ENCODE measurements at regions of chr16 and their contacts with region 1.

Region 1: DNA sequence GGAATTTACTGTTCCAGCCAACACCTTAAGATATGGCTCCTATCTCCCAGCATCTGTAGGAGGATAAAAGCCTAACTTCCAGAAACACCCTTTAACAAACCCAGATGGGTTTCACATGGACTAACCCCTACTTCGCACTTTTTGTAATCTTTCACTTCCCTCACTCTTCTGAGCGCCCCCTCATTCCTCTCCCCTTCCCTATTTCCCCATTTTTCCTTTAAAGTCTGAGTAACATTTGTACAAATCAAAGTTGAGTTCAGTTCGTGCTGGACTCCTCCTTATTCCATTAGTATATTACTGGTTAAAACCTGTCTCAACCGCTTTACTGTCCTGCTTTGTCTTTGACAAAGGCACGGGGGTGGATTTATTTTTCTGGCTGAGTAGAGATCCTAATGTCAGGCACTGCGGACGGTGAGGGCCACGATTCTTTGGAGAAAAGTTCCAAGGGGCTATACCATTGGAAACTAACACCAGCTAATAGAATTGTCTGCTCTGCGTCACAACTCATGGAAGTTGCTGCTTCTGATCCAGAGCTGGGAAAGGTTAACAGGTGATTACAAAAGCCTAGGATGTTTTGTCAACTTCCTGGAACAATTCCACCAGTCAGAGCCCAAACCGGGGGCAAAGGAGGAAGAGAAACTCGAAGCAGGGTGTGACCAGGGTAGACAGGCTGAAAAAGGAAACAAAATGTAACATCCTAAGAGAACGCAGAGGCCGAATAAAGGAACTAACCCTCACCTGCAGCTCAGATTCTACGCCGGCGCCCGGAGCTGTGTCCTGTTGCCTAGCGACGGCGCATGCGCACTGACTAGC is 12.5 kb downstream of the TAT start:
- DNase-seq: peak in 1 of 9 experiments; percentile 8
- ATAC-seq: no peak
- H3K4me3 ChIP-seq: peak overlapping the region; percentile 64 to 66
- H3K4me3 Mint-ChIP-seq: peak overlapping the region; percentile 91
- H3K27ac ChIP-seq: peak overlapping the region; percentile 72 to 73
- H3K27ac Mint-ChIP-seq: peak overlapping the region; percentile 94
- H3K4me1 ChIP-seq: peaks cover 11% of the 10 kb centered on the region
- H3K4me1 Mint-ChIP-seq: peaks cover 15% of the 10 kb centered on the region
- H3K27me3 ChIP-seq: no peaks in the 10 kb centered on the region
- H3K27me3 Mint-ChIP-seq: no peaks in the 10 kb centered on the region
- CTCF ChIP-seq: no peak

Region 2: DNA sequence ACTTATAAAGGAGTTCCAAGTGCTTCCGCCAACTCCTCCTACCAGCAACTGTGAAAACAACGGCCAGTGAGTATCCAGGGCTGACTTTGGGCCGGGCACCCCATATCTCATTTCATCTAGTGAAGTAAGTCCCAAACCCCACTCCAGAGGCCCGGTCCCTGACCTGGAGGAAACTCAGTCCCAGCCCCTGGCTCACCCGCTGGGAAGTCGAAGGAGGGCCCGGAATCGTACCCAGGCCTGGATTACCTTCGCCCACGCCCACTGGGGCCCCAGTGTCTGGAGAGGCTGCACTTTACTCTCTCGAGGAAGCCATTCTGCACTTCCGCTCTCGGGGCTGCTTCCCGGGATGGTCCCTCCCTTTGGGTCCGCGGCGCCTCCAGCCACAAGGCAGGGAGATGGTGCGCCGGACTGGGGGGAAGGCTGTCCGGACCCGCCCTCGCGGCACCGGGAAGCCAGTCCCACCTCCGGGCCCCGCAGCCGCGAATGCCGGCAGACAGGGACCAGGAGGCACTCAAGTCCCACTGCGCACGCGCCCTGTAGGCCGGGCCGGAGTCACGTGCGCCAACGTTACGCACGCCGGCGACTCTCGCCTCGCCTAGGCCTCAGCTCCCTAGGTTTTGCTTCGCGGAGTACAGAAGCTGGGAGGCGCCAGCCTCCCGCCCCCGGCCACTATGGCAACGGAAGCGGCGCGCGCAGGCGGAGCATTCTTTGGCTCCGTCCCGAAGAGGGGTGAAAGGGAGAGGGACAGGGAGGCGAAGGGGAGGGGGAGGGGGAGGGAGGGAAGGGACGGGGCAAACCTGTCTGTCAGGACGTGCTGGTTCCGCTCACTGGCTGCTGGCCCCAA is 275.2 kb before region 1 on chr16 and contains the start of gene CMTR2:
- CTCF ChIA-PET with region 1: interaction called, 3 read pairs
- POLR2A ChIA-PET with region 1: no interaction called
- intact Hi-C with region 1: loop called (anchors 10 kb)
- DNase-seq: peak; percentile 71 to 95 (median 87)
- ATAC-seq: peak; percentile 91
- H3K4me3 ChIP-seq: peak within 1 kb of the TSS; percentile 72 to 91
- H3K4me3 Mint-ChIP-seq: peak within 1 kb of the TSS; percentile 87
- H3K27ac ChIP-seq: peak within 1 kb of the TSS; percentile 75 to 85
- H3K27ac Mint-ChIP-seq: peak within 1 kb of the TSS; percentile 80
- H3K4me1 ChIP-seq: peaks cover 11% of the 10 kb centered on the region
- H3K4me1 Mint-ChIP-seq: peaks cover 26% of the 10 kb centered on the region
- H3K27me3 ChIP-seq: no peaks in the 10 kb centered on the region
- H3K27me3 Mint-ChIP-seq: peaks cover 14% of the 10 kb centered on the region
- CTCF ChIP-seq: no peak
- total RNA-seq, gene CMTR2: 7.7 to 9.2 TPM

Region 3: GRCh38 chr16:71610936-71611871 is 46.8 kb after region 1 on chr16:
- CTCF ChIA-PET with region 1: interaction called, 48 read pairs
- POLR2A ChIA-PET with region 1: interaction called, 6 read pairs
- intact Hi-C with region 1: loop called (anchors 1 kb)
- DNase-seq: peak; percentile 56 to 86 (median 79)
- ATAC-seq: peak; percentile 97
- H3K4me3 ChIP-seq: no peak overlapping the region
- H3K4me3 Mint-ChIP-seq: peak overlapping the region; percentile 22
- H3K27ac ChIP-seq: no peak overlapping the region
- H3K27ac Mint-ChIP-seq: no peak overlapping the region
- H3K4me1 ChIP-seq: no peaks in the 10 kb centered on the region
- H3K4me1 Mint-ChIP-seq: peaks cover 2% of the 10 kb centered on the region
- H3K27me3 ChIP-seq: no peaks in the 10 kb centered on the region
- H3K27me3 Mint-ChIP-seq: peaks cover 38% of the 10 kb centered on the region
- CTCF ChIP-seq: peak; percentile 88

Region 4: DNA sequence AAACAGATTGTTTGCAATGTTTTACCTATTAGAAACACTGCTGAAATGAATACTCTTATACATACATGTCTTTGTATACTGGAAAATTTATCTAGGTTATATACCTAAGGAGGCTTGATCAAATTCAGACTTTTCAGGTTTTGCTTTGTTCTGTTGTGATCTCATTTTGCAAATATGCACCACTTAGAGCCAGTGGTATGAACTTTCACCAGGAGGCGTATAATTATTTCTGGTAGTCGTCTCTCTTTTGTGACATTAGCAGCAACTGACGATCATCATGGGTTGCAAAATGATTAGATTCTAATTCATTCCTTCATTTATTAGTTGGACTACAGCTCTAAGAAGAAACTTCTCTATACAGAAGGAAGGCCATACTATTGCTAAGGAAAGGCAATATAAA is 217.4 kb after region 1 on chr16:
- CTCF ChIA-PET with region 1: no interaction called
- POLR2A ChIA-PET with region 1: no interaction called
- intact Hi-C with region 1: no loop called
- DNase-seq: no peak
- ATAC-seq: no peak
- H3K4me3 ChIP-seq: no peak overlapping the region
- H3K4me3 Mint-ChIP-seq: no peak overlapping the region
- H3K27ac ChIP-seq: no peak overlapping the region
- H3K27ac Mint-ChIP-seq: no peak overlapping the region
- H3K4me1 ChIP-seq: peaks cover 5% of the 10 kb centered on the region
- H3K4me1 Mint-ChIP-seq: peaks cover 43% of the 10 kb centered on the region
- H3K27me3 ChIP-seq: no peaks in the 10 kb centered on the region
- H3K27me3 Mint-ChIP-seq: no peaks in the 10 kb centered on the region
- CTCF ChIP-seq: no peak

Region 5: DNA sequence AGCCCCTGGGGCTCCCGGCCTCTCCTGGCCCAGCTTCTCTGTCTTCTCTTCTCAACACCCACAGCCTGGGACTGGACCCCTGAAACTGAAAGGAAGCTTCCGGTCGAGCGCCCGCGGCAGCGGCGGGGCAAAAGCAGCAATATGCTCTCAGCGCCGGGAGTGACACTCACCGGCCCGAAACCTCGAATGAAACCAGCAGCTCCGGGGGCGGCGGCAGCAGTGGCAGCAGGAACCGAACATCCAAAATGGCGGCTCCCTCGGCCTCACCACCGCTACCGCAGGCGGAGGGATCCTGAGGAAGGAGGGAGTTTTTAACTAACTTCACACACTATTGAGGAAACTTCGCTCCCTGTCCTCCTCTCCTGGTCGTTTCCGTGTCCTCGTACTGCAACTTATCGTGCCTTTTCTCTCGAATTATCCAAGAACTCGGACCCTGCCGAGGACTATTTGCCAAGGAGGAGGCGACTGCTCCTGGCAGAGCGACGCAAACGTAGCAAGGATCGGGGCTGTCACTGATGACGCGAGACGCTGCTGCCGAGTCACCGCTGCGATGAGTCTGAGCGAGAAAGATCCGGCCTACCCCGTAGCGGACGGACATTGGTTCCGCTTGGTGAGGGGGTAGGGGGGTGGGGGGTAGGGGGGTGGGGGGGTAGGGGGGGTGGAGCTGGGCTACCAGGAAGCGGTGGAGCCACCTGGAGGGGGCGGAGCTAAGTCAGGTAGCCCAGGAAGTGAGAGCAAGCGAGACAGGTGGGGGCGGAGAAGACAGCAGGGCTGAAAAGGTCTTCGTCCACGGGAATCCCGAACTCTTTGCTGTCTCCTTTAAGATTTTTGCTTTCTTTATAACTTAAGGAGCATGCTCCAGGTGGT is 244.5 kb after region 1 on chr16 and contains the start of gene AP1G1:
- CTCF ChIA-PET with region 1: no interaction called
- POLR2A ChIA-PET with region 1: interaction called, 5 read pairs
- intact Hi-C with region 1: loop called in 1 of 2 experiments (anchors 2 kb)
- DNase-seq: peak; percentile 87 to 99 (median 93)
- ATAC-seq: peak; percentile 89
- H3K4me3 ChIP-seq: peak within 1 kb of the TSS; percentile 95
- H3K4me3 Mint-ChIP-seq: peak within 1 kb of the TSS; percentile 95
- H3K27ac ChIP-seq: peak within 1 kb of the TSS; percentile 98
- H3K27ac Mint-ChIP-seq: peak within 1 kb of the TSS; percentile 99
- H3K4me1 ChIP-seq: peaks cover 26% of the 10 kb centered on the region
- H3K4me1 Mint-ChIP-seq: peaks cover 40% of the 10 kb centered on the region
- H3K27me3 ChIP-seq: no peaks in the 10 kb centered on the region
- H3K27me3 Mint-ChIP-seq: no peaks in the 10 kb centered on the region
- CTCF ChIP-seq: no peak
- total RNA-seq, gene AP1G1: 179 to 202 TPM

Region 6: DNA sequence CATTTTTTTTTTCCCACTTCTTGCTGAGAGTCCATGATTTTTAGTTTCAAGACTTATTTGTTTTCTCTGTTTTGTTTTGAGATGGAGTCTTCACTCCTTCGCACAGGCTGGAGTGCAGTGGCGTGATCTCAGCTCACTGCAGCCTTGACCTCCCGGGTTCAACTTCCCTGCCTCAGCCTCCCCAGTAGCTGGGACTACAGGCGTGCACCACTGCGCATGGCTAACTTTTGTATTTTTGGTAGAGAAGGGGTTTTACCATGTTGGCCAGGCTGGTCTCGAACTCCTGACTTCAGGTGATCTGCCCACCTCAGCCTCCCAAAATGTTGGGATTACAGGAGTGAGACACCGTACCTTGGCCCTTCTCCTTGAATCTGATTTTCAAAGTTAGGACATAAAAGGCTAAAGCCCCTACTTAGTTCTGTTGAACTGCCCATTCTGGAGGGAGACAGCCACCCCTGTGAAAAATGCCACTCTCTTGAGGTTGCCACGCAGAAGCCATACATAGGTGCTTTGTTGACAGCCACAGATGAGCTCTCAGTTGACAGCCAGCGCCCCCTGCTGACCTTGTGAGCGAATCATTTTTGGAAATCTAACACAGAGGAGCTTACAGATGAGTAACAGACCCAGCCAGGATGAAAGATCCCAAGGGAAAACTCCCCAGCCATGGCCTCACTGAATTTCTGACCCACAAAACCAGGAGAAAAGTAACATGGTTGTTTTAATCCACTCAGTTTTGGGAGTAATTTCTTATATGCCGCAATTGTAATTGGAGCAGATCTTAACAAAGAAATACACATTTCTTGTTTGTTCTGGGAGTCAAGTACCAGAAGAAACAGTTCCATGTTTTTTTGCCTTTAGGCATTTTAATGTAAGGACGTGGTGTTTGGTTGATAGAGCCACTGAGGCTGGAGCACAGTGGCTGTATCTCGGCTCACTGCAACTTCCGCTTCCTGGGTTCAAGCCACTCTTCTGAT is 397.0 kb after region 1 on chr16:
- CTCF ChIA-PET with region 1: interaction called, 10 read pairs
- POLR2A ChIA-PET with region 1: interaction called, 3 read pairs
- intact Hi-C with region 1: loop called in 1 of 2 experiments (anchors 5 kb)
- DNase-seq: peak; percentile 67 to 90 (median 82)
- ATAC-seq: peak; percentile 92
- H3K4me3 ChIP-seq: no peak overlapping the region
- H3K4me3 Mint-ChIP-seq: no peak overlapping the region
- H3K27ac ChIP-seq: no peak overlapping the region
- H3K27ac Mint-ChIP-seq: no peak overlapping the region
- H3K4me1 ChIP-seq: peaks cover 5% of the 10 kb centered on the region
- H3K4me1 Mint-ChIP-seq: peaks cover 5% of the 10 kb centered on the region
- H3K27me3 ChIP-seq: no peaks in the 10 kb centered on the region
- H3K27me3 Mint-ChIP-seq: no peaks in the 10 kb centered on the region
- CTCF ChIP-seq: peak; percentile 83

Region 7: GRCh38 chr16:72664509-72665225 is 1100.3 kb after region 1 on chr16:
- CTCF ChIA-PET with region 1: no interaction called
- POLR2A ChIA-PET with region 1: no interaction called
- intact Hi-C with region 1: loop called in 1 of 2 experiments (anchors 10 kb)
- DNase-seq: peak; percentile 87 to 98 (median 93)
- ATAC-seq: peak; percentile 98
- H3K4me3 ChIP-seq: peak overlapping the region; percentile 81 to 93
- H3K4me3 Mint-ChIP-seq: peak overlapping the region; percentile 100
- H3K27ac ChIP-seq: peak overlapping the region; percentile 59 to 77
- H3K27ac Mint-ChIP-seq: peak overlapping the region; percentile 98
- H3K4me1 ChIP-seq: peaks cover 14% of the 10 kb centered on the region
- H3K4me1 Mint-ChIP-seq: peaks cover 24% of the 10 kb centered on the region
- H3K27me3 ChIP-seq: no peaks in the 10 kb centered on the region
- H3K27me3 Mint-ChIP-seq: no peaks in the 10 kb centered on the region
- CTCF ChIP-seq: no peak

Measured in CD8-positive, alpha-beta T cell (primary cell).